Gastrocnemius medialis (tissue), 4 donors: ENCODE measurements at regions of chr12 and their contacts with region 1.

Region 1: DNA sequence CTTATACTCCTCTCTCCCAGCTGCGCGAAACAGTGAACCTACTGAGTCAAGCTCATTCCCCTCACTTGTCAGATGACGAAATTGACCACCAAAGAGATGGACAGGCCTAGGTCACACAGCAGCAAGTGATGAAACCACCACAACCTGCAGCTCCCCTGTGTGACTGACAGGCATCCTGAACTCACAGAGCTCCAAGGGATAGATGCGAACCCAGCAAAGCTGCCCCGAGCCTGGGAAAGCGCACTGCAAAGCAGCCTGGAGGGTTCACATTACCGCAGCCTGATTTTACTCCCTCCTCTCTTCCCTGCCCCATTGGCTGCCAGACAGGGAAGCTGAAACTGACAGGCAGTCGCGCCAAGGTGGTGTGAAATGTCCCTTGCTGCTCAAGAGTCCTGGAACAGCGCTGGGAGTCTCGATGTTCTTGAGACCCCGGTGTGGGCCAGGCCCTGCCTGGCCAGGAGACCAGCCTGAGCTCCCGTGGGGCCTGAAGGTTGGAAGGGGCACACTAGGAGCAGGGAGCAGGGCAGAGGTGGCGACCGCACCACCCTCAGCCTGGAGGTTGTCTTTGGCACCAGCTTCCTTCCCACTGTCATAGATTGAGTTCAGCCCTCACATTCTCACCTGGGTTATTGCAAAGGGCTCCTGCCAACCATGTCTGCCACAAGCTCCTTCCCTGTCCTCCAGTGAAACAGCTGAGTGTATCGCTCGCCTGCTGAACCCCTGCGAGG is 36.3 kb downstream of the SNRNP35 start:
- DNase-seq: peak; percentile 80 to 95
- ATAC-seq: peak; percentile 78 to 85
- H3K4me3 ChIP-seq: peak overlapping the region; percentile 8 to 23 (median 18)
- H3K27ac ChIP-seq: peak overlapping the region; percentile 86 to 99 (median 95)
- H3K4me1 ChIP-seq: peaks cover 28 to 31% of the 10 kb centered on the region in 2 donors
- H3K27me3 ChIP-seq: no peaks in the 10 kb centered on the region
- CTCF ChIP-seq: no peak
- POLR2A ChIP-seq: peak; percentile 37 to 58

Region 2: DNA sequence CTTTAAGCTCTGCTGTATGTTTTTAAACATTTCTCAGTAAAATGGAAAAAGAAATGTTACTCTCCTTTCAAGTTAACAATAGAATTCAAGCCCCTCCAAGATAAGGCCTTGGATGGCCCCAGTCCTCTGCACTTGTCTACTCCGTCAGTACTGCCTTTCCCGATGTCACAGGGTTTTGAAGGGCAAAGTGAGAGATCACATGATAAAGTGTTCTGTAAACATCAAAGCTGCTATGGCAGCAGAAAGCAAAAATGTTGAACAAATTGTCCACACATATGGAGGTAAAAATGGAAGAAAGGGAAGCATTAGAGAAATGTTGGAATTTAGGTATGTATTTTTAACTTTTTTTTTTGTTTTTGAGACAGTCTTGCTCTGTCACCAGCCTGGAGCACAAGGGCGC is 189.2 kb before region 1 on chr12:
- in situ Hi-C with region 1: no loop called
- intact Hi-C with region 1: no loop called
- DNase-seq: no peak
- ATAC-seq: no peak
- H3K4me3 ChIP-seq: no peak overlapping the region
- H3K27ac ChIP-seq: no peak overlapping the region
- H3K4me1 ChIP-seq: no peaks in the 10 kb centered on the region
- H3K27me3 ChIP-seq: no peaks in the 10 kb centered on the region
- CTCF ChIP-seq: no peak
- POLR2A ChIP-seq: no peak

Region 3: DNA sequence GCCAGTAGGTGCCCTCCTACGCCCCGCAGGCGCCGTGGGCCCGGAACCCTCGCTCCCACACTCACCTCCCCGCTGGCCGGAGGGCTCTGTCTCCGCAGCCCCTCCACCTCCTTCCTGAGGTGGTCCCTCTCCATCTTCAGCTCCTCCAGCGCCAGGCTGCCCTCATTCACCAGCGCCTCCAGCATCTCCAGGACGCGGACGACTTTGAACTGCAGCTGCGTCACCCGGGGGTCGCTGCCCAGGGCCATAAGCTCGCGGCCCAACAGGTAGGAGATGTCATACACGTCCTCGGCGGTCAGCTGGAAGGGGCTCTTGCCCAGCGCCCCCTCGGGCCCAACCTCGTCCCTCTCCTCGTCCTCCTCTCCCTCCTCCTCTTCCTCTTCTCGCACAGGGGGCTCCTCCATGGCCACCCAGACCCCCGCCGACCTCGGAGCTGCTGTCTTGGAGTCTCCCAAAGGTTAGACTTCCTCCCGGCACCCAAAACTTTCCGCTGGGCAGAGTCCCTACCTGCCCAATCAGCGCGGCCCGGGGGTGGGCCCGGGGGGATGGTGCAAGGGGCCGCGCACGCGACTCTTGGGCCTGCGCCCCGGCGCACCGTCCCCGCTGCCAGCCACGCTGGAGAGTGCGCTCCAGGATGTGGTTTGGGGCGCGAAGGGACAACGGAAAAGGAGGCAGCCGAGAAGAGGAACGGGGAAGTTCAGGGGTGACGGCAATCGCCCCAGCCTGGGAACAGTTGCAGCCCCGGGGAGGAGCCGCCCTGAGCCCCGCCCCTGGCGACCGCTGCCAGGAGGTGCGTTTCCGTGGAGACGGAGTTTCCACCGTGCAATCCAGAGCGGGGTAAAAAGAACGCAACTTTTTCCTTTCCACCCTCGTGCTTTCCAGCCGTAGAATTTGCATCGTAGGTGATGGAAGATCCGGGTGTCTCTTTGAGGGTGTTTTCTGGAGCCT is 58.0 kb before region 1 on chr12 and contains the start of gene RILPL2:
- in situ Hi-C with region 1: no loop called
- intact Hi-C with region 1: loop called (anchors 1 kb)
- DNase-seq: peak; percentile 68 to 77
- ATAC-seq: peak; percentile 92 to 96
- H3K4me3 ChIP-seq: peak within 1 kb of the TSS; percentile 79 to 96 (median 94)
- H3K27ac ChIP-seq: peak within 1 kb of the TSS; percentile 66 to 75 (median 69)
- H3K4me1 ChIP-seq: peaks cover 10 to 14% of the 10 kb centered on the region in 2 donors
- H3K27me3 ChIP-seq: no peaks in the 10 kb centered on the region
- CTCF ChIP-seq: peak in 2 of 5 experiments; percentile 6 to 32
- POLR2A ChIP-seq: peak; percentile 43 to 44
- total RNA-seq, gene RILPL2: 1.2 to 2.0 (median 1.7) TPM

Region 4: GRCh38 chr12:123478762-123479161 is 15.5 kb before region 1 on chr12:
- in situ Hi-C with region 1: no loop called
- intact Hi-C with region 1: loop called (anchors 1 kb)
- DNase-seq: peak; percentile 91 to 95
- ATAC-seq: peak; percentile 83 to 87
- H3K4me3 ChIP-seq: peak overlapping the region; percentile 17 to 45 (median 30)
- H3K27ac ChIP-seq: peak overlapping the region; percentile 96 to 99 (median 98)
- H3K4me1 ChIP-seq: peaks cover 38 to 48% of the 10 kb centered on the region in 2 donors
- H3K27me3 ChIP-seq: no peaks in the 10 kb centered on the region
- CTCF ChIP-seq: peak in 1 of 5 experiments; percentile 10
- POLR2A ChIP-seq: peak; percentile 26 to 47

Region 5: GRCh38 chr12:123519141-123520001 is 25.1 kb after region 1 on chr12:
- in situ Hi-C with region 1: no loop called
- intact Hi-C with region 1: loop called (anchors 2 kb)
- DNase-seq: peak; percentile 58 to 77
- ATAC-seq: peak; percentile 79 to 83
- H3K4me3 ChIP-seq: peak overlapping the region in 2 of 4 donors; percentile 13 to 19
- H3K27ac ChIP-seq: peak overlapping the region; percentile 75 to 88 (median 85)
- H3K4me1 ChIP-seq: peaks cover 12% of the 10 kb centered on the region in 2 donors
- H3K27me3 ChIP-seq: no peaks in the 10 kb centered on the region
- CTCF ChIP-seq: no peak
- POLR2A ChIP-seq: no peak